ENCODE measurements at regions of chr11 and their contacts with region 1.

Region 1: GRCh38 chr11:72413914-72414628 is 20.3 kb downstream of the CLPB start:
- DNase-seq: peak; percentile 85
- ATAC-seq: peak; percentile 86
- H3K4me3 Mint-ChIP-seq: no peak overlapping the region
- H3K27ac Mint-ChIP-seq: no peak overlapping the region
- H3K4me1 Mint-ChIP-seq: peaks cover 32% of the 10 kb centered on the region
- H3K27me3 Mint-ChIP-seq: no peaks in the 10 kb centered on the region

Region 2: DNA sequence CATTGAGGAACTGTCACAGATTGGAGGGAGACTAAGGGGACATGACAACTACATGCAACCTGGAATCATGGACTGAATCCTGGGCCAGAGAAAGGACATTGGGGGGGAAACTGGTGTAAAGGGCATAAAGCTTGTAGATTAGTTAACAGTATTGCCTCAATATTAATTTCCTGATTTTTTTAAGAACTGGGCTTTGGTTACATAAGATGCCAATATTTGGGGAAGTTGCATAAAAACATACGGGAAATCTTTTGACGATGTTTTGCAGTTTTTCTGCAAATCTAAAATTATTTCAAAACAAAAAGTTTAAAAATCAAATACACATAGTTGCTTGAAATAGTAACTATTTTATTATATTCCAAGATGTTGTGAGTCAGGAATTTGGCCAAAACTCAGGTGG is 281.4 kb before region 1 on chr11:
- CTCF ChIA-PET with region 1: no interaction called
- POLR2A ChIA-PET with region 1: no interaction called
- DNase-seq: no peak
- ATAC-seq: no peak
- H3K4me3 Mint-ChIP-seq: no peak overlapping the region
- H3K27ac Mint-ChIP-seq: no peak overlapping the region
- H3K4me1 Mint-ChIP-seq: peaks cover 4% of the 10 kb centered on the region
- H3K27me3 Mint-ChIP-seq: peaks cover 20% of the 10 kb centered on the region

Region 3: DNA sequence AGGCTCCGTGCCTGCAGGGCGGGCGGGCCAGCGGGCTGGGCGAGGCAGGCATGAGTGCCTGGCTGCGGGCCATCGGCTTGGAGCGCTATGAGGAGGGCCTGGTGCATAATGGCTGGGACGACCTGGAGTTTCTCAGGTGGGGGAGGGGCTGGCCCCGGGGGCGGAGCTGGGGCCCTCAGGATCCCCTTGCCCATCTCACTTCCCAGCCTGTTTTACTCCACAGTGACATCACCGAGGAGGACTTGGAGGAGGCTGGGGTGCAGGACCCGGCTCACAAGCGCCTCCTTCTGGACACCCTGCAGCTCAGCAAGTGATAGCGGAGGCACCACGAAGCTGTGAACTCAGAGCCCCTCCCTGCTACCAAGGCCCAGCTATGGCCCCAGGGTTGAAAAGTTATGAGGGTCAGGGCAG is 176.0 kb before region 1 on chr11:
- CTCF ChIA-PET with region 1: interaction called, 11 read pairs
- POLR2A ChIA-PET with region 1: no interaction called
- DNase-seq: peak; percentile 58
- ATAC-seq: peak; percentile 55
- H3K4me3 Mint-ChIP-seq: no peak overlapping the region
- H3K27ac Mint-ChIP-seq: no peak overlapping the region
- H3K4me1 Mint-ChIP-seq: peaks cover 20% of the 10 kb centered on the region
- H3K27me3 Mint-ChIP-seq: peaks cover 35% of the 10 kb centered on the region

Region 4: DNA sequence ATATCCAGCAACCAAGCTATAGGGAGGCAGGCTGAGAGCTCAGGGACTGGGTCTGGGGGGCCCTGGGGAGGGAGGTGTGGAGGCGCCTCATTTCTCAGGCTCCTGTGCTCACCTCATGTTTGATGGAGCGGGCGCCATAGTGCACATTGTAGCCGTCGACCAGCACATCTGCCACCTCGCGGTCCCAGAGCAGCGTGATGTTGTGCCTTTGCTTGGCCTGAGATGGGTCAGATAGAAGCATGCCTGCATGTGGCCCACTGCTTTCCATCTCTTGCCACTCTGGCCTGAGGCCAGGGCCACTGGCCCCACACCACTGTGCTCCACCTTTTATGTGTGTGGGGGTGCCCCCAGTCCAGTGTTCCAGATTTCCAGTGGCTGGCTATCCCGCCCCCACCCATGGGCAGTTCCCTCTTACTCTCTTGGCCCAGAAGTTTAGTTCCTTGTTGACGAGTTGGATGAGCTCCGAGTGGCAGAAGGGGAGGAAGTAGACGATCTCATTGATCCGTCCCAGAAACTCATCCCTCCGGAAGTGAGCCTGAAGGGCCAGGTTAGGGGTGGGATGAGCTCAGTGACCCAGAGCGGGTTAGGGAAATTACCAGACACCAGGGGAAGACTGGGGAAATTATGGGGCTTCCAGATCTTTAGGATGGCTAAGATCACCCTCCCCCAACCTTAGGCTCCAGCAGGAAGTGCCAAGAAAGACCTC is 120.0 kb before region 1 on chr11:
- CTCF ChIA-PET with region 1: interaction called, 31 read pairs
- POLR2A ChIA-PET with region 1: no interaction called
- DNase-seq: no peak
- ATAC-seq: no peak
- H3K4me3 Mint-ChIP-seq: no peak overlapping the region
- H3K27ac Mint-ChIP-seq: no peak overlapping the region
- H3K4me1 Mint-ChIP-seq: no peaks in the 10 kb centered on the region
- H3K27me3 Mint-ChIP-seq: no peaks in the 10 kb centered on the region

Region 5: DNA sequence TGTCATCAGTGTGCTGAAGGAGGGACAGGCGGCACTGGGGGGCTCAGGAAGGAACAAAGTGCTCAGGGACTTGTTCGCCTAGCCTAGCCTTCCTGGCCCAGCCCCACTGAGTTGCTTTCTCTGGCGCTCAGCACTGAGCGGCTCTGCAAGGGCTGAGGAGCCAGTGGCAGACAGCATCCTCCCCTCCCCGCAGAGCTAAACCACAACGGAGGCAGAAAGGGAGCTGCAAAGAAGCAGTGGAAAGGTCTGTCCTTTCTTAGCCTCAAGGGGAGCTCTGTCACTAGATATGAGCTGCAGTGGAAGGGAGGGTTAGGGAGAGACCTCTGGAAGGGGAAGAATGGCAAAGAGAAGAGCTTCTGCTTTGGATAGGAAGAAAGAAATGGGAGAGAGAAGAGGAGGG is 80.4 kb before region 1 on chr11:
- CTCF ChIA-PET with region 1: interaction called, 33 read pairs
- POLR2A ChIA-PET with region 1: no interaction called
- DNase-seq: peak; percentile 91
- ATAC-seq: peak; percentile 97
- H3K4me3 Mint-ChIP-seq: peak overlapping the region; percentile 12
- H3K27ac Mint-ChIP-seq: peak overlapping the region; percentile 82
- H3K4me1 Mint-ChIP-seq: peaks cover 45% of the 10 kb centered on the region
- H3K27me3 Mint-ChIP-seq: no peaks in the 10 kb centered on the region

Region 6: GRCh38 chr11:72396041-72396440 is 18.0 kb before region 1 on chr11:
- CTCF ChIA-PET with region 1: interaction called, 16 read pairs
- POLR2A ChIA-PET with region 1: no interaction called
- DNase-seq: no peak
- ATAC-seq: no peak
- H3K4me3 Mint-ChIP-seq: no peak overlapping the region
- H3K27ac Mint-ChIP-seq: no peak overlapping the region
- H3K4me1 Mint-ChIP-seq: no peaks in the 10 kb centered on the region
- H3K27me3 Mint-ChIP-seq: no peaks in the 10 kb centered on the region

Region 7: DNA sequence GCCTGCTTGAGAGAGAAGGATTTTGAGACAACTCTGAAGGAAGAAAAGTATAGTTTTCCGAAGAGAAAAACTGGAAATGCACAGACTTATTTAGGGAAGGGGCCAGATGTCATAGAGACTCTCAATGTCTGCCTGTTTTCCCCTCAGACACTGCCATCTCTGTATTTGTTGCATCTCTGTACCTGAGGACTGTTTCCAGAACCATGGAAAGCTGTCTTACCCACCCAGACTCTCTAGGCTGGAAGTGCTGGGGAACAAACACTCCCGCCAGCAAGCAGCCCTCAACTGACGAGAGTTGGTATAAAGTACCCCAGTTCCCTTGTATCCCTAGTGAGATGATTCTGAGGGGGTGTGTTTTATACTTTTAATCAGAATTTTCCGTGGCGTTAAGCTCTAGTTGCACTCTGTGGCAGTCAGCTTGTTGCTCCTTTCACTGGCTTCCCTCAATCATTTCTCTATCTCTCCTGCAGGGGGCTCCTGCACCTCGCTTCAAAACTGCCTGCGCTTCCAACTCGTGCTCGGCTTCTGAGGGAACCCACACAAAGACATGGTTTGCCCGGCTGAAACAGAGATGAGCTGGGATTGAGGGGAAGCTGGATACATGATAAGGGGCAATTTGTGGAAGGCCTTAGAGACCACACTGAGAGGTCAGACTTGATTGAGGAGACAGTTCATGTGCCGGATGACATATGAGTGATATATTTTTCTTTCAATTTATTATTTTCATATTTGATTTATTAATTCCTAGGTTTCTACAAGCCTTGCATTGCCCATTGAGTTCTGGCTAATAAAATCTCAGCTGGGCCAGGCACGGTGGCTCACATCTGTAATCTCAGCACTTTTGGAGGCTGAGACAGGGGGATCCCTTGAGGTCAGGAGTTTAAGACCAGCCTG is 57.2 kb after region 1 on chr11:
- CTCF ChIA-PET with region 1: no interaction called
- POLR2A ChIA-PET with region 1: no interaction called
- DNase-seq: peak; percentile 69
- ATAC-seq: peak; percentile 98
- H3K4me3 Mint-ChIP-seq: no peak overlapping the region
- H3K27ac Mint-ChIP-seq: no peak overlapping the region
- H3K4me1 Mint-ChIP-seq: peaks cover 2% of the 10 kb centered on the region
- H3K27me3 Mint-ChIP-seq: peaks cover 48% of the 10 kb centered on the region

Region 8: GRCh38 chr11:72585762-72586311 is 171.8 kb after region 1 on chr11:
- CTCF ChIA-PET with region 1: no interaction called
- POLR2A ChIA-PET with region 1: no interaction called
- DNase-seq: peak; percentile 77
- ATAC-seq: peak; percentile 73
- H3K4me3 Mint-ChIP-seq: no peak overlapping the region
- H3K27ac Mint-ChIP-seq: no peak overlapping the region
- H3K4me1 Mint-ChIP-seq: peaks cover 30% of the 10 kb centered on the region
- H3K27me3 Mint-ChIP-seq: peaks cover 49% of the 10 kb centered on the region

Measured in activated CD8-positive, alpha-beta T cell treated with anti-CD3 and anti-CD28 coated beads, Interleukin-2, amount 10 ng/mL, durations not matched to agents 7 days and 5 days (primary cell).